Right ventricle myocardium superior (tissue), 1 donor: ENCODE measurements at regions of chr18 and their contacts with region 1.

Region 1: DNA sequence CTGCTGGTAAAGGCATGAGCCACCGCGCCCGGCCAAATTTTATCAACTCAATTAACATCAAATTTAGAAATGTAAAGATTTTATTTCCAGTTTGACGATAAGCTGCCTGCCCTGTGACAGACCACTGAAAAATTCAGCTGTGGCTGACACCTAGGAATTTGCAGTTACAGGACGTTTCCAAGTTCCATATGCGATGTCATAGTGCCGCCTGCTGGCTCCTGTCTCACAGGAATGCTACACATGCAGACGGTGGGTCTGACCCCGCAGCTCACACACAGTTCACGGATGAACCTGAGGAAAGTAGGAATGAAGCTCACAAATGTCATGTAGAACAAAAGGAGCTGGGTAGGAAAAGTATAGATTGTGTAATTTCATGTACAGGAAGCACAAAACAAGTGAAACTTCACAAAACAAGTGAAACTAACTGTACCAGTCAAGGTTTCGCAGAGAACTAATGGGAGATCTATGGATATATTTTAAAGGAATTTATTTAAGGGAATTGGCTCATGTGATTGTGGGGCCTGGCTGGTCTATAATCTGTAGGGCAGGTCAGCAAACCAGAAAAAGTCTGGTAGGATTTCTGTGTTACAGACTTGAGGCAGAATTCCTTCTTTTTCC is 13.2 kb upstream of the SEH1L start:
- DNase-seq: peak; percentile 90
- ATAC-seq: peak; percentile 96

Region 2: GRCh38 chr18:12391618-12392165 is 542.9 kb before region 1 on chr18:
- intact Hi-C with region 1: loop called (anchors 10 kb)
- DNase-seq: no peak
- ATAC-seq: peak; percentile 94

Region 3: GRCh38 chr18:12726774-12727550 is 207.6 kb before region 1 on chr18:
- intact Hi-C with region 1: loop called (anchors 5 kb)
- DNase-seq: no peak
- ATAC-seq: peak; percentile 68

Region 4: DNA sequence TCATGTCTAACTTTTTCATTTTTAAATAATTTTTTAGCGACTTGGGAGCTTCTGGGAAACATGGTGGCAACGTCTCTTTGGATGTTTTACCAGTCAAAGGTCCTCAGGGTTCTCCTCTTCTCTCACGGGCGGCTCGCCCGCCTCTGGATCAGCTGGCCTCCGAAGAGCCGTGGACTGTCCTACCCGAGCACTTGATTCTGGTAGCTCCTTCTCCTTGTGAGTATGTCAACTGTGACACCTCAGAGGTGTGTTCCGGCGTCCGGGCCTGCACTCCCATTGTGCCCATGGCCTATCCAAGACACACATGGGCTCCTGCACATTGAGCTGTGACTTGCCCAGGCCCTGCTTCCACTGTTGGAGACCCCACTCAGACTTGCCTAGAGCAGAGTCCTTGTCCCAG is 160.9 kb after region 1 on chr18:
- intact Hi-C with region 1: no loop called
- DNase-seq: no peak
- ATAC-seq: no peak